Activated CD8-positive, alpha-beta memory T cell treated with anti-CD3 and anti-CD28 coated beads, Interleukin-2, amount 10 ng/mL, durations not matched to agents 7 days and 5 days (primary cell): ENCODE measurements at regions of chr10 and their contacts with region 1.

Region 1: GRCh38 chr10:101214446-101215396 is 14.5 kb downstream of the LBX1 start:
- DNase-seq: peak; percentile 73
- ATAC-seq: peak; percentile 79
- H3K4me3 Mint-ChIP-seq: no peak overlapping the region
- H3K27ac Mint-ChIP-seq: no peak overlapping the region
- H3K4me1 Mint-ChIP-seq: peaks cover 19% of the 10 kb centered on the region
- H3K27me3 Mint-ChIP-seq: peaks cover 79% of the 10 kb centered on the region

Region 2: GRCh38 chr10:101228153-101228973 is 13.6 kb after region 1 on chr10:
- CTCF ChIA-PET with region 1: interaction called, 17 read pairs
- DNase-seq: no peak
- ATAC-seq: no peak
- H3K4me3 Mint-ChIP-seq: no peak overlapping the region
- H3K27ac Mint-ChIP-seq: peak overlapping the region; percentile 61
- H3K4me1 Mint-ChIP-seq: peaks cover 17% of the 10 kb centered on the region
- H3K27me3 Mint-ChIP-seq: peaks cover 81% of the 10 kb centered on the region

Region 3: GRCh38 chr10:101291331-101292193 is 76.8 kb after region 1 on chr10:
- CTCF ChIA-PET with region 1: interaction called, 21 read pairs
- DNase-seq: peak; percentile 50
- ATAC-seq: no peak
- H3K4me3 Mint-ChIP-seq: no peak overlapping the region
- H3K27ac Mint-ChIP-seq: no peak overlapping the region
- H3K4me1 Mint-ChIP-seq: peaks cover 1% of the 10 kb centered on the region
- H3K27me3 Mint-ChIP-seq: peaks cover 81% of the 10 kb centered on the region

Region 4: DNA sequence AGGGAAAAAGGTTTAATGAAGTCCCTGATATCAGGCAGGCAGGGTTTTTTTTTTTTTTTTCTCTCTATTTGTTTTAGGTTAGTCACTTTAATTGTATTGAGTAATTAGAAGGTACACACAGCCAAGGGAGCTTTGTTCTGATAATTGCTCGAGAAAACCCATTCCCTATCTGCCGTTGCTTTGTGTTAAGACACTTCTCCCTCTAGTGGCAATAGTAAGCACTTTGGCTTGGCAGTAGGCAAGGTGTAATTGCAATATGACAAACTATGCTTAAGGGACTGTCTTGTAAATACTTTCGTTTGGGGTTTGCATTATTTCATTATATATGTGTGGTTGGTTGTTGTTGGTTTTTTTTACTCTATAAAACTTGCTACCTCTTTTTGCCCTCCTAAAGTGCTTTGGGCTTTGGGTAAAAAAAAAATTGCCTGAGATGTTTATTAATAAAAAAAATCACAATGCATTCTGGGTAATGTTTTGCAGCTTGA is 252.6 kb after region 1 on chr10:
- CTCF ChIA-PET with region 1: interaction called, 12 read pairs
- DNase-seq: peak; percentile 50
- ATAC-seq: peak; percentile 87
- H3K4me3 Mint-ChIP-seq: no peak overlapping the region
- H3K27ac Mint-ChIP-seq: no peak overlapping the region
- H3K4me1 Mint-ChIP-seq: peaks cover 6% of the 10 kb centered on the region
- H3K27me3 Mint-ChIP-seq: no peaks in the 10 kb centered on the region

Region 5: GRCh38 chr10:101782811-101783735 is 568.4 kb after region 1 on chr10 and contains the start of gene NPM3:
- CTCF ChIA-PET with region 1: interaction called, 12 read pairs
- DNase-seq: peak; percentile 93
- ATAC-seq: peak; percentile 82
- H3K4me3 Mint-ChIP-seq: peak within 1 kb of the TSS; percentile 94
- H3K27ac Mint-ChIP-seq: peak within 1 kb of the TSS; percentile 96
- H3K4me1 Mint-ChIP-seq: peaks cover 55% of the 10 kb centered on the region
- H3K27me3 Mint-ChIP-seq: peaks cover 9% of the 10 kb centered on the region
- total RNA-seq, gene NPM3: 46.1 to 75.4 TPM